AG04449 (cell line): ENCODE measurements at regions of chr21 and their contacts with region 1.

Region 1: DNA sequence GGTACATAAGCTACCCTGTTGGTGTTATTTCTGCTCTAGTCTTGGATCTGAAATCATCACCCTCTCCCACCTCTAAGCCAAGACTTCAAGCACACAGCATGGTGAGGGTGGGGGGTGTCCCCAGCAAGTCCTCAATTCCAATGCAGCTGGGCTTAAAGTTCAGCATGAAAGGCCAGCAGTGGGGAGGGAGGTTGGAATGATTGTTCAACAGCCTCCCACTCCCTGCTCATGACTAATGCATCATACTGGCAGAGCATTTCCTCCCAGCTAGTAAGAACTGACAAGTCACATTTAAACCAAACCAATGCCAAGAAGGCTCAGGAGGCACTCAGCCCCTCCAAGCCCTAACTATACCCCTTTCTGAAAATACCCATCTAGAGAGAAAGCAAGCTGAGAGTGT is 50.1 kb downstream of the TIAM1 start:
- DNase-seq: peak; percentile 88
- H3K4me3 ChIP-seq: no peak overlapping the region
- CTCF ChIP-seq: no peak

Region 2: GRCh38 chr21:31282095-31282709 is 11.8 kb before region 1 on chr21:
- CTCF ChIA-PET with region 1: interaction called, 7 read pairs
- POLR2A ChIA-PET with region 1: interaction called, 10 read pairs
- DNase-seq: peak; percentile 92
- H3K4me3 ChIP-seq: peak overlapping the region; percentile 31
- CTCF ChIP-seq: no peak